A673 (cell line): ENCODE measurements at regions of chr1 and their contacts with region 1.

Region 1: GRCh38 chr1:225977937-225978748 is 21.0 kb downstream of the SDE2 start:
- DNase-seq: no peak
- H3K4me3 ChIP-seq: no peak overlapping the region
- H3K27ac ChIP-seq: no peak overlapping the region
- H3K4me1 ChIP-seq: no peaks in the 10 kb centered on the region
- H3K27me3 ChIP-seq: no peaks in the 10 kb centered on the region
- CTCF ChIP-seq: no peak

Region 2: DNA sequence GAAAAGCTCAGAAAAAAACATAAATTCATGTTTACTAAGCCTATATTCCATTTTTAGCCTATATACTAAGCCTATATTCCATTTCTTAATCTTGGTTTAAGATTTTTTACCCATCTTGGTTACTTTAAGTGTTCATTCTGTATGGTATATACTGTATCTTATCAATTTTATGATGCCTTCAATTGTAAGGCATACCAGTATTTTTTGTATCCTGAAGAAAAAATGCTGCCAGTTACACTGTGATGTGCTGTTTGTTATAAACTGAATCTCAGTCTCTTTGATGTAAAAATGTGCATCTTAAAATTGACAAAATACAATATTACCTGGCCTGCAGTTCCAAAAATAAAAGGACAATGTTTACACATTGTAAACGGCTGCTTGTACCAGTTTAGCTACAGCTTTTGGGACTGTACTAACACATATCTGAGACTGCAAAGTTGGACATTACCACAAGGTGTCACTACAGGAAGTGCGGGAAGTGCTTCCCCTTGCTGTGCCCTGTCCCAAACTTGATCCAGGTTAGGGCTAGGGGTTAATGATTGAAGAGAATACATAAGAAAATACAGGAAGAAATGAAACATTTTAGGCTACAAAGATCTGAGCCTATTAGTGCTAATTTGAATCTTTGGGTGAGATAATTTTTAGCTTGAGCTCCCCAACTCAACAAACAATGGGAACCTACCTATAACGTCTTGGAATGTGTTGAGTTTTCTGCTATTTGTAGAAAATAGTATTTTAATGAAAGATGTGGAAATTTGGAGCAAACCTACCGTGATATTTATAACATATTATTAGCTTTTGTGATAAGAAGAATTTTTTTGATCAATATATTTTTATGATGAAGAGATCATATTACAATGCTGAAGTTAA is 659.2 kb before region 1 on chr1:
- CTCF ChIA-PET with region 1: no interaction called
- POLR2A ChIA-PET with region 1: no interaction called
- intact Hi-C with region 1: loop called (anchors 2 kb)
- DNase-seq: peak; percentile 75
- H3K4me3 ChIP-seq: no peak overlapping the region
- H3K27ac ChIP-seq: no peak overlapping the region
- H3K4me1 ChIP-seq: no peaks in the 10 kb centered on the region
- H3K27me3 ChIP-seq: no peaks in the 10 kb centered on the region
- CTCF ChIP-seq: peak; percentile 92

Region 3: DNA sequence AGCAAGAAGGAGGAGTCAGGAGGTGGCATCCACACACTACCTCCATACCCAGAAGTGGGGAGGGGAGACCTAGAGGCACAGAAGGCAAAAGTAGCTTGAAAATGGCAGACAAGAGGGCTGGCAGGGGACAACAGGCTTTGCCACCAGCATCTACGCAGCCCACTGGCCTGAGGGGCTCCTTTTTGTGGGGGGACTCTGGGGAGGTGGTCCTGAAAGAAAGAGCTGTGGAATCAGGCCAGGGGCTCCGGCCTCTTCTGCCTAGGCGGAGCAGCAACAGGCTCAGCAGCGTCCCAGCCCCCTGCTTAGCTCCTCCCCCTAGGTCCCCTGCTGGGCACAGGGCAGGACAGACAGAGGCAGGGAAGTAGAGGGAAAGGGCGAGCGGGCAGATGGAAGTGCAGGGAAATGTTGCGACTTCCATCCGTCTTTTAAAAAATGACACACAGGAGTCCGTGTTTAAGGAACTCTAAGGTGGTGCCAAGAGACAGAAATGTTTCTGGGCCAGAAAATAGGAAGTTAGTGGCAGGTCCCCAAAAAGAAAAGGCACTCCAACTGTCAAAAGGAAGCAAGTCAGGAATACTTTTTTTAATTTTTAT is 27.1 kb before region 1 on chr1:
- CTCF ChIA-PET with region 1: no interaction called
- POLR2A ChIA-PET with region 1: interaction called, 13 read pairs
- intact Hi-C with region 1: no loop called
- DNase-seq: no peak
- H3K4me3 ChIP-seq: no peak overlapping the region
- H3K27ac ChIP-seq: no peak overlapping the region
- H3K4me1 ChIP-seq: no peaks in the 10 kb centered on the region
- H3K27me3 ChIP-seq: no peaks in the 10 kb centered on the region
- CTCF ChIP-seq: no peak

Region 4: DNA sequence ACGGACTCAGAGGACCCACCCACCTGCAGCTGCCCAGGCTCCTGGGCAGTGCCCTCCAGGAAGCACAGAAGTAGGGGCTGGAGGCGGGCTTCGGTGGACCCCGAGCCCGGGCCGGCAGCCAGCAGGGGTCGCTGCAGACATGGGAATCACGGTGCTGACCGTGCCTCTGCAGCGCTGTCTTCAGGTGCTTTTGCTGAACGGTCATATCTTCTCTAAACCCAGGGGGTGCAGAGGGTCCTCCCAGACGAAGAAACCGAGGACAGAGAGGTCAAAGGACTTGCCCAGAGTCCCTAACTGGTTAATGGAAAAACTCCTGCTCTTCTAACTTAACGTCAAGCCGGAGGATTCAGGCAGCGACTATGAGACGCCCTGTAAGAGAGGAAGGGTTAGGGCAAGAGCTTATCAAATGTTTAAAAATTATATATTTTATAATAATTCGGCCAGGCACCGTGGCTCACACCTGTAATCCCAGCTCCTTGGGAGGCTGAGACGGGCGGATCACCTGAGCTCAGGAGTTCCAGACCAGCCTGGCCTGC is 15.6 kb before region 1 on chr1:
- CTCF ChIA-PET with region 1: no interaction called
- POLR2A ChIA-PET with region 1: no interaction called
- intact Hi-C with region 1: no loop called
- DNase-seq: peak; percentile 50
- H3K4me3 ChIP-seq: no peak overlapping the region
- H3K27ac ChIP-seq: no peak overlapping the region
- H3K4me1 ChIP-seq: no peaks in the 10 kb centered on the region
- H3K27me3 ChIP-seq: no peaks in the 10 kb centered on the region
- CTCF ChIP-seq: peak; percentile 95

Region 5: DNA sequence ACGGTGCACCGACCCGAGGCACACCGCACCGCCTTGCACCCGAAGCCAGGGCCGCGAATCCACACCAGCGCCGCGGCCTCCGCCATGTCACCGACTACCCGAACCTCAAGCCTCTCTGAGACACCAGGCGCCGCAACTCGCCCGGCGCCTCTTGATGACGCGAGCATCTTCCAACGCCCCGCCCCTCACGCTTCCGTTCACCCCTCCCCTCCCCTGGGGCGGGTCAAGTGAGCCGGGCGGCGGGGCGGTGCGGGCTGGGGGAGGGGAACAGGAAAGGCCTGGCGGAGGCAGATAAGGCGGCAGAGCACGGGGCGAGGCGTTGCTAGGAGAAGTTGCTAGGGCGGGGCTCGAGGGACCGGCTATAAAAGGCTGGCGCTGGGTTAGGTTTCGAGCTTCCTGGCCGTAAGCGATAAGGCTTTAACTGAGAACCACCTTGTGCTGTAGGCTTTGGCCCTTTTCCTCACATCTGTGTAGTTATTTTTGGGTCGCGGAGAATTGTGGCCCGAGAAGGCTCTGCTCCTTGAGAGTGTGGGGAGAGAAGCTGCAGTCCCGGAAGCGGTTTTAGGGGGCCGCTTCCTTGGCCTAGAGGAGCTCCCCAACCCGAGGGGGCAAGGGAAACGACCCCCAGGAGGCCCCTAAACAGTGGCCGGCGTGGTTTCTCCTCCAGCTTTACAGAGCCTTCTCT is 21.2 kb after region 1 on chr1 and contains the start of gene SDE2:
- CTCF ChIA-PET with region 1: no interaction called
- POLR2A ChIA-PET with region 1: no interaction called
- intact Hi-C with region 1: no loop called
- DNase-seq: peak; percentile 99
- H3K4me3 ChIP-seq: peak within 1 kb of the TSS; percentile 92
- H3K27ac ChIP-seq: peak within 1 kb of the TSS; percentile 87
- H3K4me1 ChIP-seq: peaks cover 41% of the 10 kb centered on the region
- H3K27me3 ChIP-seq: no peaks in the 10 kb centered on the region
- CTCF ChIP-seq: no peak
- total RNA-seq, gene SDE2: 26.7 and 27.7 TPM in 2 replicates